Motor neuron (in vitro differentiated cells): ENCODE measurements at regions of chr1 and their contacts with region 1.

Region 1: GRCh38 chr1:62407405-62408009 is 29.3 kb upstream of the USP1 start:
- ATAC-seq: peak; percentile 50 to 72 (median 61)
- H3K4me3 ChIP-seq: no peak overlapping the region
- H3K27ac ChIP-seq: no peak overlapping the region
- H3K4me1 ChIP-seq: no peaks in the 10 kb centered on the region

Region 2: GRCh38 chr1:62159940-62160348 is 247.6 kb before region 1 on chr1:
- in situ Hi-C with region 1: loop called in 1 of 9 experiments (anchors 25 kb)
- ATAC-seq: no peak
- H3K4me3 ChIP-seq: no peak overlapping the region
- H3K27ac ChIP-seq: no peak overlapping the region
- H3K4me1 ChIP-seq: no peaks in the 10 kb centered on the region

Region 3: GRCh38 chr1:62175568-62176179 is 231.8 kb before region 1 on chr1:
- in situ Hi-C with region 1: loop called (anchors 5 to 25 kb)
- ATAC-seq: peak; percentile 38 to 64 (median 50)
- H3K4me3 ChIP-seq: no peak overlapping the region
- H3K27ac ChIP-seq: no peak overlapping the region
- H3K4me1 ChIP-seq: peaks cover 3 to 8% of the 10 kb centered on the region in 2 donors

Region 4: DNA sequence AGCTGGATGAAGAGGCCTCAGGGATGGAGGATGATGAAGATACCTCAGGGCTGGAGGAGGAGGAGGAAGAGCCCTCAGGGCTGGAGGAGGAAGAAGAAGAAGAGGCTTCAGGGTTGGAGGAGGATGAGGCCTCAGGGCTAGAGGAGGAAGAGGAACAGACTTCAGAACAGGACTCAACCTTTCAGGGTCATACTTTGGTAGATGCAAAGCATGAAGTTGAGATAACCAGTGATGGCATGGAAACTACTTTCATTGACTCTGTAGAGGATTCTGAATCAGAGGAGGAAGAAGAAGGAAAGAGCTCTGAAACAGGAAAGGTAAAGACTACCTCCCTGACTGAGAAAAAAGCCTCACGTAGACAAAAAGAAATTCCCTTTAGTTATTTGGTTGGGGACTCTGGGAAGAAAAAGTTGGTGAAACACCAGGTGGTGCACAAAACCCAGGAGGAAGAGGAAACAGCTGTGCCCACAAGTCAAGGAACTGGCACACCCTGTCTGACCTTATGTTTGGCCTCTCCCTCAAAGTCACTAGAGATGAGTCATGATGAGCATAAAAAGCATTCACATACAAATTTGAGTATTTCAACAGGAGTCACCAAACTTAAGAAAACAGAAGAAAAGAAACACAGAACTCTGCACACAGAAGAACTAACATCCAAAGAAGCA is 197.4 kb before region 1 on chr1:
- in situ Hi-C with region 1: no loop called
- ATAC-seq: peak in 2 of 8 experiments; percentile 65 to 96
- H3K4me3 ChIP-seq: no peak overlapping the region
- H3K27ac ChIP-seq: no peak overlapping the region
- H3K4me1 ChIP-seq: no peaks in the 10 kb centered on the region